Common myeloid progenitor, CD34-positive (primary cell): ENCODE measurements at regions of chr16 and their contacts with region 1.

Region 1: DNA sequence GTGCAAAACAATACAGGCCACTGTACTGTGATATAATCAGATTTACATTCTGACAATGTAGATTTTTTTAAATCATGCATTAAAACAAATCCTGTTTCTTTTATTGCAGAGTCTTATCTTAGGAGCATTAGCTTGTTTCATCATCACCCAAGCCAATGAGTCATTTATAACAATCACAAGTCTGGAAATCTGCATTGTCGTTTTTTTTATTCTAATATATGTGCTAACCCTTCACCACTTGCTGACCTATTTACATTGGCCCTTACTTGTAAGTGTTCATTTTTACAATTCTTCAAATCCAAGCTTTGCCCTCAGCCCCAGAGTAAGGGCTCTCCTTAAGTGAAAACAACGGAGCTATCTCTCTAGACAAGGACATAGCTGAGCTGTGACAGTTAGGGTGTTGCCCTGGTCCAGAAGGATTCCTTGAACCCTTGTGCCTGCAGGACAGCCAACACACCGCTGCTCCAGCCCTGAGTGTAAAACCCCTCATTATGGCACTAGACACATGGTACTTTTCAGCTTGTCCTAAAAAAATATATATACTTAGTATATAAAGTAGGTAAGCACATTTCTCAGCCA is 3.7 kb downstream of the CMTM1 start:
- DNase-seq: no peak
- H3K4me3 ChIP-seq: no peak overlapping the region
- H3K27ac ChIP-seq: no peak overlapping the region
- H3K4me1 ChIP-seq: peaks cover 9 to 43% (median 25%) of the 10 kb centered on the region in 4 experiments
- H3K27me3 ChIP-seq: no peaks in the 10 kb centered on the region

Region 2: GRCh38 chr16:66446737-66447136 is 123.2 kb before region 1 on chr16:
- CTCF ChIA-PET with region 1: no interaction called
- POLR2A ChIA-PET with region 1: no interaction called
- DNase-seq: no peak
- H3K4me3 ChIP-seq: no peak overlapping the region
- H3K27ac ChIP-seq: no peak overlapping the region
- H3K4me1 ChIP-seq: no peaks in the 10 kb centered on the region
- H3K27me3 ChIP-seq: peaks cover 0 to 8% (median 0%) of the 10 kb centered on the region in 5 experiments

Region 3: GRCh38 chr16:66521951-66522771 is 47.8 kb before region 1 on chr16:
- CTCF ChIA-PET with region 1: interaction called, 14 read pairs
- POLR2A ChIA-PET with region 1: interaction called, 4 read pairs
- DNase-seq: peak; percentile 87 to 96 (median 94)
- H3K4me3 ChIP-seq: peak overlapping the region in 4 of 7 experiments; percentile 2 to 41 (median 31)
- H3K27ac ChIP-seq: peak overlapping the region in 1 of 2 experiments; percentile 68
- H3K4me1 ChIP-seq: peaks cover 50 to 96% (median 93%) of the 10 kb centered on the region in 4 experiments
- H3K27me3 ChIP-seq: no peaks in the 10 kb centered on the region

Region 4: DNA sequence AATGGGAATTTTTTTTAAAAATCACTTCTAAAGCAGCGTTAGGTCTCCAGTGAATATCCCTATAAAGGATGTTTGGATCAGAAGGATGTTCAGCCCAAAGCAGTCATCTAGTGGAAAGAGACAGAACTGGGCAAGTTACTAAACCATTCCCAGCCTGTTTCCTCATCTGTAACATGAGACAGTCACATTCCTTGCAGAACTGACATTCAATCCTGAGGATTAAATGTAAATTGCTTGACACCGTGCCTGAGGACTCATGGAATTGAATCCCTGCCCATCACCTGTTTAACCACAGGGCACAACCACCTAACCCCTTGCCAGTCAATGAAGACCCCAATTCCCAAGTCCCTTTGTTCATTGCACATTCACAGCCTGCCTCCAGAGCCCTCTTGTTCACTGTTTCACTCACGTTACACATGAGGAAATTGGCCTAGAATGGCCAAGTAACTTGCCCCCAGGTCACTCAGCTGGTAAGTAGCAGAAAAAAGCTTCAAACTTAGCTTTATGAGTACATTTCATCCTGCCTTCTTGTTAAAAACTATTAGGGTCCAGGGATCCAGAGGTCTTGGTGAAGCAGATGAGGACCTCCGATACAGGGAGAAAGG is 10.8 kb after region 1 on chr16:
- CTCF ChIA-PET with region 1: interaction called, 82 read pairs
- POLR2A ChIA-PET with region 1: interaction called, 3 read pairs
- DNase-seq: no peak
- H3K4me3 ChIP-seq: no peak overlapping the region
- H3K27ac ChIP-seq: no peak overlapping the region
- H3K4me1 ChIP-seq: peaks cover 8 to 36% (median 29%) of the 10 kb centered on the region in 4 experiments
- H3K27me3 ChIP-seq: peaks cover 0 to 1% (median 0%) of the 10 kb centered on the region in 5 experiments